K562 (cell line): ENCODE measurements at regions of chr5 and their contacts with region 1.

Region 1: DNA sequence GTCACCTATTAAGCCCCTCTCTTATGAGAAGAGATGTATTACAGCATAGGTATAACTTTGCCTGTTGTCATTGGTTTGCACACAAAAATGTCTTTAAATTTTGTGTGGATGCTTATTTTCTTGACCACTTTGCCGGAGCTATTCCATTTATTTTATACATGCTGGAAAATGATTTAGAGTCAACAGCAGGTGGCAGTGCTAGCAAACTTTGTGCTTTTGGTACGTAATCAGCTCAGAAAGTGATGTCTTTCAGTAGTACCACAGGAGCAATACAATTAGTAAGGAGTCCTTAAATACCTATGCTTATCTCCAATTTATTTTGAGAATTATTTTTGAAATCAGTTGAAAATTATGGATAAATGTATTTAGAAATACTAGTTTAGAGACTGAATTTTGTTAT is 19.8 kb upstream of the NUDT12 start:
- DNase-seq: peak; percentile 15 to 61 (median 18)
- ATAC-seq: peak; percentile 75
- H3K4me3 ChIP-seq: no peak overlapping the region
- H3K27ac ChIP-seq: no peak overlapping the region
- H3K4me1 ChIP-seq: no peaks in the 10 kb centered on the region
- H3K27me3 ChIP-seq: no peaks in the 10 kb centered on the region
- CTCF ChIP-seq: peak; percentile 33 to 71 (median 56); a peak in 4 of 6 replicates
- EP300 ChIP-seq: no peak
- POLR2A ChIP-seq: no peak
- RAD21 ChIP-seq: peak; percentile 60 to 76

Region 2: GRCh38 chr5:103389846-103390245 is 192.5 kb before region 1 on chr5:
- CTCF ChIA-PET with region 1: no interaction called
- POLR2A ChIA-PET with region 1: no interaction called
- in situ Hi-C with region 1: no loop called
- intact Hi-C with region 1: no loop called
- DNase-seq: no peak
- ATAC-seq: no peak
- H3K4me3 ChIP-seq: no peak overlapping the region
- H3K27ac ChIP-seq: no peak overlapping the region
- H3K4me1 ChIP-seq: no peaks in the 10 kb centered on the region
- H3K27me3 ChIP-seq: no peaks in the 10 kb centered on the region
- CTCF ChIP-seq: no peak
- EP300 ChIP-seq: no peak
- POLR2A ChIP-seq: no peak
- RAD21 ChIP-seq: no peak

Region 3: GRCh38 chr5:103706939-103707682 is 124.7 kb after region 1 on chr5:
- CTCF ChIA-PET with region 1: no interaction called
- POLR2A ChIA-PET with region 1: no interaction called
- in situ Hi-C with region 1: no loop called
- intact Hi-C with region 1: loop called (anchors 5 kb)
- DNase-seq: no peak
- ATAC-seq: no peak
- H3K4me3 ChIP-seq: no peak overlapping the region
- H3K27ac ChIP-seq: no peak overlapping the region
- H3K4me1 ChIP-seq: no peaks in the 10 kb centered on the region
- H3K27me3 ChIP-seq: no peaks in the 10 kb centered on the region; a peak in 1 of 5 replicates
- CTCF ChIP-seq: no peak
- EP300 ChIP-seq: no peak
- POLR2A ChIP-seq: no peak
- RAD21 ChIP-seq: no peak

Region 4: DNA sequence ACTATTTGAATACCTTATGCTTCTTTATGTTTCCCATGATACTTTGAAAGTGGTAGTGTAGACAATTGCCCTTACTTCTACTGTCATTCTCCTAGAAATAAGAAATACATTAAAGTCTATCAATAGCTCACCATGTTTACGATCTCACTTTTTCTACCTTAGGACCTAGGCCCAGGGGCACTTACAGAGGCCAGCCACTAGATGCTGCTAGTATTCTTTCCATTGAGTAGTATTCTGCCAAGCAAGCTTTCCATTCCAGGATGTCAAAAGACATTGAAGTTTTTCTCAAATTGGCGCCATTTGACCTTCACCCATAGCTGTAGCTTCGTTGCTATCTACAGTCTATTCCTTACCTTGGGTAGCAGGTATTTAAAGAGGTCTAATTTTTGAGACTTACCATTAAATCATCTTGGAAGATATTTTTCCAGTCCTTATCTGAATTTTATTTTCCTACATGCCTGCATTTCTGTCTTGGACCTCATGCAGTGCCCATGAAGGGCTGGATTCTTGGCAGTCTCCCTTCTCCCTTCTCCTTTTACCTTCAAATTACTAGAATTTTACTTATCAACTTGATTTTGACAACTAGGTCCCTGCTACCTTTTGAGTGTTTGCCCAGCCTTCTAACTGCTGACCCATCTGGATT is 226.2 kb after region 1 on chr5:
- CTCF ChIA-PET with region 1: no interaction called
- POLR2A ChIA-PET with region 1: no interaction called
- in situ Hi-C with region 1: no loop called
- intact Hi-C with region 1: loop called (anchors 5 kb)
- DNase-seq: peak; percentile 12 to 44 (median 24)
- ATAC-seq: peak; percentile 93
- H3K4me3 ChIP-seq: no peak overlapping the region
- H3K27ac ChIP-seq: no peak overlapping the region
- H3K4me1 ChIP-seq: no peaks in the 10 kb centered on the region
- H3K27me3 ChIP-seq: no peaks in the 10 kb centered on the region
- CTCF ChIP-seq: peak; percentile 62 to 84 (median 76)
- EP300 ChIP-seq: no peak
- POLR2A ChIP-seq: no peak
- RAD21 ChIP-seq: peak; percentile 84 to 86

Region 5: DNA sequence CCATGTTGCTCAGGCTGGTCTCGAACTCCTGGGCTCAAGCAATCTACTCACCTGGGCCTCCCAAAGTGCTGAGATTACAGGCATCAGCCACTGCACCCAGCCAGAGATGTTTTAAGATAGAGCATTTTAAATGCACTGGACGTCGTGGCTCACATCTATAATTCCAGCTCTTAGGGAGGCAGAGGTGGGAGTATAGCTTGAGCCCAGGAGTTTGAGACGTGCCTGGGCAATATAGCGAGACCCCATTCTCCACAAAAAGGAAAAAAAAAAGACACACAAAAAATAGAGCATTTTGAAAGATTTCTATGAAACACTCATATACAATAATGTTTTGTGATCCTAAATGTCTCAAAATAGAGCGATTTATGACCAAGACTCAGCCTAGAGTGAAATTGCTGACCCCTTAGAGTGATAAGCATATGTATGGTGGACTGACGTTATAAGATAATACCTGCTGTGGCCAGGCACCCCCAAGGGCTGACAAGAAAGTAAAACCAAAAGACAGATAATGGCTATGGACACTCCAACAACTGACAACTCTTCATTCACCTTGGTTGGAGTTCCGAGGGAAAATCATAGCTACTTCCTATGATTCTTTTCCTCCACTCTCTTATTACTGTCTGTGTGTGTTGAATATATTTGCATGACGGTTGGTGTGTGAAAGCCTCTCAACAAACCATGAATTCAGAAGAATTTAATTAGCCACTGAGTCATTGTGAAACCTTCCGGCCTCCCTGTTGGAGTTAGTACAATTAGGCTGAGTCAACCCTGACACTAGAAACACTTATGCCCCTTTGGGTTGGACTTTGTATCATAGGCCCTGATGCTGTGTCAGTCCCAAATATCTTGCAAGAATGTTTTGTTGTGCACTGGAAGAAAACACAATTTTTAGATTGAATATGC is 506.8 kb after region 1 on chr5:
- CTCF ChIA-PET with region 1: no interaction called
- POLR2A ChIA-PET with region 1: no interaction called
- in situ Hi-C with region 1: no loop called
- intact Hi-C with region 1: loop called (anchors 10 kb)
- DNase-seq: peak in 2 of 4 experiments; percentile 59 to 81
- ATAC-seq: peak; percentile 91
- H3K4me3 ChIP-seq: peak overlapping the region; percentile 14
- H3K27ac ChIP-seq: peak overlapping the region; percentile 92
- H3K4me1 ChIP-seq: peaks cover 0 to 12% of the 10 kb centered on the region in 2 experiments; a peak in 2 of 5 replicates
- H3K27me3 ChIP-seq: no peaks in the 10 kb centered on the region
- CTCF ChIP-seq: no peak
- EP300 ChIP-seq: peak; percentile 78
- POLR2A ChIP-seq: no peak
- RAD21 ChIP-seq: no peak